ENCODE measurements at regions of chr14 and their contacts with region 1.

Region 1: GRCh38 chr14:29927376-29928116 is at the start of gene PRKD1:
- DNase-seq: peak in 1 of 2 donors; percentile 25
- ATAC-seq: peak; percentile 63 to 66
- H3K4me3 ChIP-seq: peak within 1 kb of the TSS; percentile 51 to 67 (median 62)
- H3K27ac ChIP-seq: peak within 1 kb of the TSS; percentile 32 to 70 (median 59)
- H3K4me1 ChIP-seq: peaks cover 8 to 15% of the 10 kb centered on the region in 2 donors
- H3K27me3 ChIP-seq: no peaks in the 10 kb centered on the region
- CTCF ChIP-seq: peak in 1 of 5 experiments; percentile 44
- POLR2A ChIP-seq: peak in 1 of 2 donors; percentile 20
- total RNA-seq, gene PRKD1: 1.5 to 4.1 (median 1.7) TPM

Region 2: DNA sequence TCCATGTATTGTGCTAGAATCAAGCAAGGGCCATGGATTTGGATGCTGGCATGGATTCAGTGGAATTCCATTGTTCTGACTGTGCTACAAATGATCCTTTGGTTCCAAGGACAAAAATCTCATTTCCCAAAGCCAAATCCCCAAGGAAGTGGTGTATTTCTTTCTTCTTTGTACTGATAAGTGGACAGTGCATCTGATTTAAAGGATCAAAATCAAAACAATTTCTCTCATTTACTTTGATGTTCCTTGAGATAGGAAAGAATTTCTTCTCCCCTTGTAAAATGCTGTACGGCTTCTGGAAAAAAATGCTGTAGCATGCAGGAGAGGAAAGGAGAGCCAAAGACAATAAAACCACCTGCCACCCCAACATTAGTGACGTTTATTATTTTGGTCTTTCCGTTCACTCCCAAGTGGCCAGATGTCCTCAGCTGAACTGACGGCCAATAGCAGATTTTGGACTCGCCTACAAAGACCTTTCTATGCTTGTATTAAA is 185.6 kb before region 1 on chr14:
- in situ Hi-C with region 1: no loop called
- intact Hi-C with region 1: loop called (anchors 5 kb)
- DNase-seq: peak in 1 of 2 donors; percentile 21
- ATAC-seq: peak; percentile 65 to 78
- H3K4me3 ChIP-seq: no peak overlapping the region
- H3K27ac ChIP-seq: peak overlapping the region in 3 of 4 donors; percentile 21 to 60 (median 23)
- H3K4me1 ChIP-seq: peaks cover 39 to 42% of the 10 kb centered on the region in 2 donors
- H3K27me3 ChIP-seq: no peaks in the 10 kb centered on the region
- CTCF ChIP-seq: no peak
- POLR2A ChIP-seq: no peak

Region 3: GRCh38 chr14:29805415-29806123 is 122.0 kb before region 1 on chr14:
- in situ Hi-C with region 1: no loop called
- intact Hi-C with region 1: loop called (anchors 5 kb)
- DNase-seq: peak; percentile 24 to 40
- ATAC-seq: peak; percentile 69 to 70
- H3K4me3 ChIP-seq: no peak overlapping the region
- H3K27ac ChIP-seq: no peak overlapping the region
- H3K4me1 ChIP-seq: peaks cover 10 to 11% of the 10 kb centered on the region in 2 donors
- H3K27me3 ChIP-seq: no peaks in the 10 kb centered on the region
- CTCF ChIP-seq: no peak
- POLR2A ChIP-seq: no peak

Region 4: GRCh38 chr14:30185832-30186231 is 258.3 kb after region 1 on chr14:
- in situ Hi-C with region 1: no loop called
- intact Hi-C with region 1: no loop called
- DNase-seq: no peak
- ATAC-seq: no peak
- H3K4me3 ChIP-seq: no peak overlapping the region
- H3K27ac ChIP-seq: no peak overlapping the region
- H3K4me1 ChIP-seq: no peaks in the 10 kb centered on the region
- H3K27me3 ChIP-seq: no peaks in the 10 kb centered on the region
- CTCF ChIP-seq: no peak
- POLR2A ChIP-seq: no peak

Region 5: DNA sequence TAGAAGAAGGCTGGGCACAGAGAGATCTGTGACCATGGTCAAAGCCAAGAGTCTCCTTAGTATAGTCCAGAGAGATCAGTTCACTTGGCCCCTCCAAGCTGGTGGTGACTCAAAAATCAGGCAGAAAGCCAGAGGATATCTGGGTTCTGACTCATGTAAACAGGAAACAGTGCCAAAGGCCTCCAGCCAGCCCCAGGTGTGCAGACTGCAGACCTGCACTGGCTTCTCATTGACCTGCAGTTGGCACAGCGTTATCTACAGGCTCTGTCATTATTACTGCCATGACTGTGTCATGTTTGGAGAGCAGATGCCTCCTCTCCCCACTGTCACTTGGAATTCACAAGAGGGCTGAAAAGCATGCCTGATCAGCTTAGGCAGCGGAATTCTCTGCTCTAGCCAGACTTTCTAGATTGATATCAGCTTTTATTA is 295.9 kb after region 1 on chr14:
- in situ Hi-C with region 1: no loop called
- intact Hi-C with region 1: loop called (anchors 10 kb)
- DNase-seq: peak; percentile 50 to 58
- ATAC-seq: peak; percentile 71 to 74
- H3K4me3 ChIP-seq: no peak overlapping the region
- H3K27ac ChIP-seq: peak overlapping the region; percentile 58 to 73 (median 66)
- H3K4me1 ChIP-seq: peaks cover 17 to 41% of the 10 kb centered on the region in 2 donors
- H3K27me3 ChIP-seq: no peaks in the 10 kb centered on the region
- CTCF ChIP-seq: no peak
- POLR2A ChIP-seq: no peak

Measured in gastrocnemius medialis (tissue), 4 donors.